Activated naive CD4-positive, alpha-beta T cell treated with anti-CD3 and anti-CD28 coated beads for 36 hours (primary cell): ENCODE measurements at regions of chr1 and their contacts with region 1.

Region 1: GRCh38 chr1:56803561-56804156 is 15.5 kb downstream of the FYB2 start:
- DNase-seq: peak; percentile 17
- H3K4me3 Mint-ChIP-seq: no peak overlapping the region
- H3K27ac Mint-ChIP-seq: no peak overlapping the region
- H3K4me1 Mint-ChIP-seq: no peaks in the 10 kb centered on the region
- H3K27me3 Mint-ChIP-seq: peaks cover 9% of the 10 kb centered on the region

Region 2: DNA sequence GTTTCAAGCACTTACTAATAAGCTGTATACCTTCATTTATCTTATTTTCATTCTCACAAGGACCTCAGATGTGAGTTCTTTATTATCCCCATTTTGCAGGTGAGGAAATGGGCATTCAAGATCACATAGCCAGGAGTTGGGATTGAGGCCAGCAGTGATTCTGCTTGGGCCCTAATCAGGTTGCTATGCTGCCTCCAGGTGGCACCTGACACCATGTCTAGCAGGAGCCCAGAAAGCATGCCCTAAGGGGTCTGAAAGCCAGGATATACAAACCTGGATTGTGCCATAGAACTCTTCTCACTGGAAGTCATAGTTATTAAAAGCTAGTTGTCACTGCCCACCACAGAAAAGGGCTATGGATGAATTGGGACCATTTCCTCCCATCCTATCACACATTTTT is 45.5 kb before region 1 on chr1:
- CTCF ChIA-PET with region 1: no interaction called
- intact Hi-C with region 1: loop called (anchors 10 kb)
- DNase-seq: no peak
- H3K4me3 Mint-ChIP-seq: no peak overlapping the region
- H3K27ac Mint-ChIP-seq: no peak overlapping the region
- H3K4me1 Mint-ChIP-seq: peaks cover 2% of the 10 kb centered on the region
- H3K27me3 Mint-ChIP-seq: peaks cover 11% of the 10 kb centered on the region

Region 3: GRCh38 chr1:56814205-56814604 is 10.5 kb after region 1 on chr1:
- CTCF ChIA-PET with region 1: no interaction called
- intact Hi-C with region 1: no loop called
- DNase-seq: no peak
- H3K4me3 Mint-ChIP-seq: no peak overlapping the region
- H3K27ac Mint-ChIP-seq: no peak overlapping the region
- H3K4me1 Mint-ChIP-seq: no peaks in the 10 kb centered on the region
- H3K27me3 Mint-ChIP-seq: peaks cover 43% of the 10 kb centered on the region

Region 4: DNA sequence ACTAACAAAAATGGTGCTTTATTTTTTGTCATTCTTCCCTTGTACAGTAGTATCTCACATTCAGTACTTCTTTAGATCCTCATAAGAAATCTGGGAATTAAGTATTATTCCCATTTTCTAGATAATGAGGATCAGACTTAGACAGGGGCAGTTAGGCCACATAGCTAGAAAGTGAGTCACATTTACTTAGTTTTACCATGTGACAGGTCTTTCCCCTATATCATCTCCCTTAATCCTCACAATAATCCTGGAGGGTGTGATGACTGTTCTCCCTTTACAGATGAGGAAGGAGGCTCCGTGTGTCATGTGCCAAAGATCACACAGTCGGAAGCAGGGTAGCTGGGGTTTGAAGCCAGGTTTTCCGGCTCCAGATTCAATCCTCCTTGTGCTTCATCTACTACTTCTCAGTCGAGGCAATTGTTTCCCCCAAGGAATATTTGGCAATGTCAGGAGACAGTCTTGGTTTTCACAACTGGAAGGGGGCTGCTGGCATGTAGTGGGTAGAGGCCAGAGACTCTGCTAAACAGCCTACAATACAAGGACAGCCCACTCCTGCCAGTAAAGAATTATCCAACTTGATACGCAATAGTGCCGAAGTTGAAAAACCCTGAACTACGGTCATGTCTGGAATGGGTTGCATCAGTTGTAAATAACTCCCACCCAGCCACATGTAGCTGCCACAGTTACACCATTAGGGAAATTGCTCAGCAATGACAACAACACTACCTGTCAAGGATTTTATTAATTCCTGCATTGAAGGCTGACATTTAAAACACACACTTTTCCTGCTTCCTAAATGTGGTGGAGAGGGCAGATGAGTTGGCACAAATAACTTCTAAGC is 107.7 kb after region 1 on chr1:
- CTCF ChIA-PET with region 1: no interaction called
- intact Hi-C with region 1: no loop called
- DNase-seq: no peak
- H3K4me3 Mint-ChIP-seq: no peak overlapping the region
- H3K27ac Mint-ChIP-seq: no peak overlapping the region
- H3K4me1 Mint-ChIP-seq: no peaks in the 10 kb centered on the region
- H3K27me3 Mint-ChIP-seq: peaks cover 15% of the 10 kb centered on the region